ENCODE measurements at regions of chr6 and their contacts with region 1.

Region 1: DNA sequence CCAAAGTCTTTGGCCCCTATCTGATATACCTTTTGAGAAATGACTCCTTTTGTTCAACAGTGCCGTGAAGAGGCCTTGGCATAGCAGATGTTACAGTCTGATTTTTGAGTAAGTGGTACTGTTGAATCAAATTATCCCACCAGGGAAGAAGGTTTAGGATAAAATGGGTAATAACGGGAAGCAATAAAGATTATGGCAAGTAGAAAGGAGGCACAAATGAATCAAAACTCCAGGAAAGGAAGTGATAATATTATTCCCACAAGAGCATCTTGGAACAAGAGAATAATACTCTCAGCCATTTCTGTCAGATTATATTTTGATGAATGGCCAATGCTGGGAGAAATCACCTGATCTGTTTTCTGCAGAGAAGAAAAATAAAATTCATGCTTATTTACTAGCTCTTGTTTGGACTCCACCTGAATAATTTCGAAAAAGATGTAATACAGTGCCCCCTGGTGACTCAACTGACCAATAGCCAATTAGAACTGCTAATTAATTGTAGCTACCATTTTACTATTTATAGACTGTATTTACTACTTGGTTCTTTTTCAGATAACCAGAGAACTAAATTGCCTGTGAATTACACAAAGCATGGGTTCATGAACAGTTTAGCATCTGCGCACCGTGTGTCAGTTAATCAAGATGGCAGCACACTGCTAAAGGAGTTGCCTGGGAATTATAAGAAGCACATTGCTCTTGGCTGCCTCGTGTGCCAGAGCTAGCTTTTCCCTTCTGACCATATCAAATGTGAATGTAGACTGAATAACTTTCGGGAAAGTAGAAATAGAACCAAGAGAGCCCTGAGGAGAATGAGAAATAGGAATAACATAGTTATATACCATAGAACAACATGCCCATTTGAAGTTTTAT is 78.5 kb upstream of the TRDN start:
- DNase-seq: no peak
- H3K4me3 ChIP-seq: no peak overlapping the region
- H3K27ac ChIP-seq: no peak overlapping the region
- H3K4me1 ChIP-seq: no peaks in the 10 kb centered on the region
- H3K27me3 ChIP-seq: no peaks in the 10 kb centered on the region
- CTCF ChIP-seq: peak in 1 of 3 experiments; percentile 38
- POLR2A ChIP-seq: no peak

Region 2: GRCh38 chr6:123415844-123416468 is 299.3 kb before region 1 on chr6:
- intact Hi-C with region 1: loop called (anchors 10 kb)
- DNase-seq: no peak
- H3K4me3 ChIP-seq: no peak overlapping the region
- H3K27ac ChIP-seq: no peak overlapping the region
- H3K4me1 ChIP-seq: no peaks in the 10 kb centered on the region
- H3K27me3 ChIP-seq: no peaks in the 10 kb centered on the region
- CTCF ChIP-seq: peak; percentile 21 to 55 (median 50)
- POLR2A ChIP-seq: no peak

Region 3: DNA sequence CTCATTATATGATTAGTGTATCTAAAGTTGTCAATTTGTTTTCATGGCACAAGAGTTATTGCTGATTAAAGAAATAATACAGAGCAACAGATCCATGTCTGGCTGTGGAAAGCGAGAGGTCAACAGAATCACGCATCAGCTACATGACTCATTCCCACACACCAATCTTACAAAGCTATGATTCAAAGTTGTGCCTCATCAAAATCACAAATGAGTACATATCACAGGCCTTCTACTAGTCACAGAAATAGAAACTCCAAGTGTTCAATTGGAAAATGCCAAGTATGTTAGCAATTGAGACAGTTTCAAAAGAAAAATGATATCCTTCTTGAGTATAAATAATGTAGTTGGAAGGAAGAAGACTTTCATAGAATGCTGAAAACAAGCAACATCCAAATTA is 30.7 kb after region 1 on chr6:
- intact Hi-C with region 1: no loop called
- DNase-seq: no peak
- H3K4me3 ChIP-seq: no peak overlapping the region
- H3K27ac ChIP-seq: no peak overlapping the region
- H3K4me1 ChIP-seq: no peaks in the 10 kb centered on the region
- H3K27me3 ChIP-seq: no peaks in the 10 kb centered on the region
- CTCF ChIP-seq: no peak
- POLR2A ChIP-seq: no peak

Region 4: GRCh38 chr6:123962508-123962907 is 247.3 kb after region 1 on chr6:
- intact Hi-C with region 1: no loop called
- DNase-seq: no peak
- H3K4me3 ChIP-seq: no peak overlapping the region
- H3K27ac ChIP-seq: no peak overlapping the region
- H3K4me1 ChIP-seq: no peaks in the 10 kb centered on the region
- H3K27me3 ChIP-seq: no peaks in the 10 kb centered on the region
- CTCF ChIP-seq: no peak
- POLR2A ChIP-seq: no peak

Measured in vagina (tissue), 2 donors.